ENCODE measurements at regions of chr5 and their contacts with region 1.

Region 1: GRCh38 chr5:132736853-132737833 is at the start of gene KIF3A:
- DNase-seq: peak; percentile 98
- H3K4me3 Mint-ChIP-seq: peak within 1 kb of the TSS; percentile 87
- H3K27ac Mint-ChIP-seq: peak within 1 kb of the TSS; percentile 93
- H3K4me1 Mint-ChIP-seq: peaks cover 55% of the 10 kb centered on the region
- H3K27me3 Mint-ChIP-seq: peaks cover 10% of the 10 kb centered on the region
- total RNA-seq, gene KIF3A: 58.5 and 66.9 TPM in 2 replicates

Region 2: DNA sequence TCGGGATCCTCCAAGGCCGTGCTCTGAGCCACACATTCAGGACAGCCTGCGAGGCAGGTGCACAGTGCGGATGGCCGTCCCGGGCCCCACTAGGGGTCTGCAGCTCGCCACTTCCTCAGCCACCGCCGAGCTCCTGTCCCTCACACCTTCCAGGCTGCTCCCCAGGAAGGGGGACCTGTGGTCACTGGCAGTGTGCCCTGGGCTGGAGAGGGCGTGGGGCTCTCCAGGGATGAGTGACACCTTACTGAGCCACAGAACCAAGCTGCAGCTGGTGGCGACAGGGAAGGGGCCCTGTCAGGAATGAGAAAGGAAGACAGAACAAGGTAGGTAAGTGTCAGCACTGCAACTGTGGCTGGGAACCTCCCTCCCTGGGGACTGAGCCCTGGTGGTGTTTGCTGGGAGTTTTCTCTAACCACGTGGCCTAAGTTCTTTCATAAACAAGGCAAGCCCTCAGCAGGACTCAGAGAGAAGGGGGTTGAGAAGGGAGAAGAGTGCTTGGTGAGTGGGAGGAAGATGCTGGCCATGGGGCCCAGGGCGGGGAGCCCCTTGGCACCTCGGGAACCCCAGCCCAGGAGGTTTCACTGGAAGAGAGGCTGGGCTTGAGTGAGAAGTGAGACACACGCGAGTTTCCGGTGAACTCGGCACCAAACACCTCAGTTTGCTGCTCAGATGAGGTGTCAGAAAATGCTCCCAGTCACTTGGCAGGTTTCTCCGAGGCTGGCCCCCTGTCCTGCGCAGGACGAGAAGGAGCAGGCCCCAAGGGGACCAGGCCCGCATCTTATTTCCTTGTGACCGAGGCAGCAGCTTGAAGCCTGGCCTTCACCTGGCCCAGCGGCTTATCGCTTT is 74.0 kb before region 1 on chr5:
- intact Hi-C with region 1: loop called (anchors 1 kb)
- DNase-seq: peak; percentile 43
- H3K4me3 Mint-ChIP-seq: peak overlapping the region; percentile 60
- H3K27ac Mint-ChIP-seq: peak overlapping the region; percentile 94
- H3K4me1 Mint-ChIP-seq: peaks cover 84% of the 10 kb centered on the region
- H3K27me3 Mint-ChIP-seq: no peaks in the 10 kb centered on the region

Region 3: GRCh38 chr5:132714456-132715307 is 22.5 kb before region 1 on chr5:
- intact Hi-C with region 1: loop called (anchors 1 kb)
- DNase-seq: no peak
- H3K4me3 Mint-ChIP-seq: peak overlapping the region; percentile 43
- H3K27ac Mint-ChIP-seq: no peak overlapping the region
- H3K4me1 Mint-ChIP-seq: peaks cover 15% of the 10 kb centered on the region
- H3K27me3 Mint-ChIP-seq: no peaks in the 10 kb centered on the region

Region 4: DNA sequence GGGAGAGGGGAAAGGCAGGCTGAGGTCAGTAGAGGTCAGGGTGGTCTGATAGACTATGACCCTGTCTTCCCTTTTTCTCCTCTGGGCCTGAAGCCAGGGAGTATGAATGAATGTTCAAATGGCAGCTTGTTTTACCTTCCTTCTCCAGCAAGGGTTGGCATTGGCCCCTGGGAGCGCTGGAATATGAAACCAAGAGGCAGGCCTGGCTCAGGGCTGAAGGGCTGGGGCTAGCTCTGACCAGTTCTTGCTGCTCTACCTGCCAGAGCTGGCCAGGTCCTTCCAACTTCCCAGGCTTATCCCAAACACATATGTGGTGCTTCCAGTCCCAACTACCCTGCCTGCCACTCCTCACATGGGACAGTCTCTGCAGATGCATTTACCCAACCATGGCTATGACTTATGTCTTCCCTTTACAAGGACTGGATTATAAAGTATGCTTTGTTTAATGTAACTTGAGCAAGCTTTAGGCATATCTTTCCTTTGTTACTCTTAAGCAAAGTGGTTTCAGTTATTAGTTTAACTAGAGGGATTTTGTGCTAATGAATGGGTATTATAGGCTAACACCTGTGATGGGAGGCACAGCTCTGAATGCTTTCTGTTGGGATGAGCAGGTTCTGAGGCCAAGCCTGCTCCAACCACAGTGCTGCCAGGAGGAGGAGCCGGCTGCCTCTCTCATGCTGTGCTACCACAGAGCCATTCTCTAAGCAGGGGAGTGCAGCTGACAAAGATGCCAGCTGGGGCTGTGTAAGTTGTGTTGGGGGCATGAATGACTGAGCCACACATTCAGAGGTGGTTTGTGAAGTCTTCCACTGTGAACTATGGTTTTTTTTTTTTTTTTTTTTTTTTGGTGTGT is 16.2 kb after region 1 on chr5:
- intact Hi-C with region 1: loop called (anchors 1 kb)
- DNase-seq: no peak
- H3K4me3 Mint-ChIP-seq: peak overlapping the region; percentile 35
- H3K27ac Mint-ChIP-seq: peak overlapping the region; percentile 90
- H3K4me1 Mint-ChIP-seq: peaks cover 72% of the 10 kb centered on the region
- H3K27me3 Mint-ChIP-seq: peaks cover 3% of the 10 kb centered on the region

Region 5: GRCh38 chr5:132777209-132778069 is 40.3 kb after region 1 on chr5 and contains the start of gene SEPTIN8:
- intact Hi-C with region 1: loop called (anchors 1 kb)
- DNase-seq: peak; percentile 43
- H3K4me3 Mint-ChIP-seq: peak within 1 kb of the TSS; percentile 87
- H3K27ac Mint-ChIP-seq: peak within 1 kb of the TSS; percentile 63
- H3K4me1 Mint-ChIP-seq: peaks cover 41% of the 10 kb centered on the region
- H3K27me3 Mint-ChIP-seq: peaks cover 45% of the 10 kb centered on the region
- total RNA-seq, gene SEPTIN8: 45.8 and 46.2 TPM in 2 replicates

Region 6: DNA sequence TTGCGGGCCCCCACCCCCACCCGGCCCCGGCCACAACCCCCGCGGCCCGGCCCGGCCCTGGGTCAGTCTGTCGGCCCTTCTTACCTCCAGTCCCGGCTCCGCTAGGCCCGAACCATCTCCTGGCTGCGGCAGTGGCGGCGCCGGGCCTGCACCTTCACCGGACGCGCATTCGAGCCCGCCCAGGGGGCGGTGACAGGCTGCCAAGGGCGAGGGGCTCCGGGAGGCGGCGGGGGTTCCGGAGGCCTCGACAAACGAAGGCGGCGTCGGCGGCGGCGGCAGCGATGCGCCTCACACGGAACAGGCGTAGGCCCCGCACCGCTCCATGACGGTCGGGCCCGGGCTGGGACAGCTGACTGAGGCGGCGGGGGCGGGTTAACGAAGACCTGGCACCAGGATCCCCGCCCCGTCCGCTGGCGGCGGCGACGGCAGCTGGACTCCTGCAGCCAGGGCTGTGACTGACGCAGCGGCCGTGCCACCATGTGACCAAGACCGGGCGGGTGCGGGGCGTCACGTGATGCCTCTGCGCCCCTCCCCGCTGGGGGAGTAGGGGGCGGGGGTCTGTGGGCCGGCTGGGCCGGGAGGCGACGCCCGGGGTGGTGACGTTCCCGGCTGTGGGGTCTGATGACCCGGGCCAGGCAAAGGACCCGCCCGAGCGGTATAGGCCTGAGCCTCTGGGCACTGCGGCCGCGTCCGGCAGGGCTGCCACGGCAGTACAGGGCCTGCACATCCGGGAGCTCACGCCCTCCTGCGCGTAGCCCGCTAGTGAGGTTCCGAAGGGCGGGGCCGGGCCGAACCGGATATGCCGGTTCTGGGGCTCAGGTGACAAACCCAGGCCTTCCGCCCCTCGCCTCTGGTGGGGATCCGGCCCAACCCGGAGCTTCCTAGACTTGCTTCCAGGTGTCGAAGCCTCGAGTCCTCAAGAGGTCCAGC is 226.3 kb after region 1 on chr5 and contains the start of gene AFF4:
- intact Hi-C with region 1: loop called (anchors 2 kb)
- DNase-seq: peak; percentile 85
- H3K4me3 Mint-ChIP-seq: peak within 1 kb of the TSS; percentile 93
- H3K27ac Mint-ChIP-seq: peak within 1 kb of the TSS; percentile 96
- H3K4me1 Mint-ChIP-seq: peaks cover 17% of the 10 kb centered on the region
- H3K27me3 Mint-ChIP-seq: peaks cover 3% of the 10 kb centered on the region
- total RNA-seq, gene AFF4: 38.3 and 40.9 TPM in 2 replicates

Region 7: DNA sequence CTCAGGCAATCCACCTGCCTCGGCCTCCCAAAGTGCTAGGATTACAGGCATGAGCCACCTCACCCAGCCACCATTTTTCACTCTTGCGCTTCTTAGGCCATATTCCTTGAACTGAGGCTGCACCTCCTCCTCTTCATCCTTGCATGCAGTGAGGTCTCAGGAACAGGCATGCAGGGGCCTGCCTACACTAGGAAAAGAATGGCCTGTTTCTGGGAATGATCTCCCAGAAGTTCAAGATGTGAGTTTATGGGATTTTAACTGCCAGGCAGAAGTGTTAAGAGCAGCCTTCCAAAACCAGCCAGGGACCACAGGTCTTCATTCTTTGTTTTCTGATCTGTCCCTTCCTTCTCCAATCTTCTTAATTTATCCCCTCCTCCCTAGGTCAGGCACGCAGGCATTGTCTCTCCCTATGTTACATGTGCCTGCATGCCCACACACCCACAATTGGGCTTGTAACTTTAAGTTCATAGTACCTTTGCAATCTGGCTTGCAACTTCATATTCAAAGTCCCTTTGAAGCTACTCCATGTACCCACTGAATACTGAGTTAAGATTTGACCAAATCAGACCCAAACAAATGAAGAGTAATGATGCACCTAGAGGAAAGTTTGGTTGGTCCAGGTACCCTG is 304.1 kb after region 1 on chr5:
- intact Hi-C with region 1: no loop called
- DNase-seq: no peak
- H3K4me3 Mint-ChIP-seq: no peak overlapping the region
- H3K27ac Mint-ChIP-seq: no peak overlapping the region
- H3K4me1 Mint-ChIP-seq: no peaks in the 10 kb centered on the region
- H3K27me3 Mint-ChIP-seq: no peaks in the 10 kb centered on the region

Region 8: GRCh38 chr5:133051580-133052332 is 314.6 kb after region 1 on chr5 and contains the start of gene HSPA4:
- intact Hi-C with region 1: loop called (anchors 1 kb)
- DNase-seq: peak; percentile 96
- H3K4me3 Mint-ChIP-seq: peak within 1 kb of the TSS; percentile 96
- H3K27ac Mint-ChIP-seq: peak within 1 kb of the TSS; percentile 100
- H3K4me1 Mint-ChIP-seq: peaks cover 46% of the 10 kb centered on the region
- H3K27me3 Mint-ChIP-seq: peaks cover 2% of the 10 kb centered on the region
- total RNA-seq, gene HSPA4: 244 and 247 TPM in 2 replicates

Measured in activated T-helper 1 cell treated with anti-CD3 and anti-CD28 coated beads, Interleukin-12 subunit alpha, Interleukin-12 subunit beta, Interleukin-2, Interleukin-4 antibody, amounts not matched to agents 30 ng/mL and 10 ng/mL and 1 ng/mL, durations not matched to agents 14 hours and 24 hours and 36 hours (primary cell).